Posterior vena cava (tissue), 2 donors: ENCODE measurements at regions of chr10 and their contacts with region 1.

Region 1: GRCh38 chr10:63077800-63078199 is 55.3 kb upstream of the NRBF2 start:
- DNase-seq: no peak

Region 2: GRCh38 chr10:63013755-63014154 is 64.0 kb before region 1 on chr10:
- intact Hi-C with region 1: loop called in 1 of 2 experiments (anchors 5 kb)
- DNase-seq: no peak